ENCODE measurements at regions of chr5 and their contacts with region 1.

Region 1: DNA sequence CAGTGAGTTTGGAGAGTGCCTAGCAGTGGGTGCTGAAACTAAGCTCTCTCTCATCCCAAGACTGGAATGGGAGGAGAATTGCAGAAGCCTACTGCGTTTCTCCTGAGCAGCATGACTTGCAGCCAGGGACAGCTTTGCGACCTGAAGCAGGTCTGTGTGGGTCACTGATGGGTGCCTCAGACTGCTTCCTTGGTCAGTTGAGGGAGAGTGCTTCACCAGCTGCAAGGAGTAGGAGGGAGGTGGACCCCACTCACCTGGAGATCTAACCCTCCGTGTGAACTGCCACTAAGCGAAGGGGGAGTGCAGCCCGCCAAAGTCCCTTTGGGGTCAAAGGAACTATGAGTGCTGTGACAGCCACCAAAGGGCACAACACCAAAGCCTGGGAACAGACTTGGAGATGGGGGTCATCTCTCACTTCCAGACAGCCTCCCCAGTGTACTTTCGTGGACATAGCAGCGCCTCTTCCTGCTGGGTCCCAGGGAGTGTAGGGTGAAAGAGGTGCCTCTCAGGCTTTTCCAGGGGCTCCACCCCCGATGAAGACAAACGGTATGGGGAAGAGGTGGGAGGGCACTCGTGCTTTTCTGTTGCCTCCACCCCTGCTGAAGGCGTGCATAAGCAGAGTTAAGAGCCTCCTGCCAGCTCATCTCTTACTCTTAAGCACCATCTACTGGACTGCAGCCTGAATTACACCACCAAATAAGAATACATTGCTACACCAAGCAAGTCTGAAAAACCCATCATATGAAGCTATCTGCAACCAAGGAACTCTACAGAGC is 34.3 kb upstream of the MACIR start:
- DNase-seq: peak; percentile 78
- H3K4me3 ChIP-seq: no peak overlapping the region
- H3K27ac ChIP-seq: no peak overlapping the region
- H3K4me1 ChIP-seq: no peaks in the 10 kb centered on the region
- H3K27me3 ChIP-seq: no peaks in the 10 kb centered on the region
- CTCF ChIP-seq: peak; percentile 69 to 71
- POLR2A ChIP-seq: no peak

Region 2: GRCh38 chr5:102681407-102681983 is 542.8 kb before region 1 on chr5:
- CTCF ChIA-PET with region 1: interaction called, 26 read pairs
- POLR2A ChIA-PET with region 1: no interaction called
- dilution Hi-C with region 1: no loop called
- intact Hi-C with region 1: loop called (anchors 2 kb)
- DNase-seq: peak; percentile 85
- H3K4me3 ChIP-seq: no peak overlapping the region
- H3K27ac ChIP-seq: no peak overlapping the region
- H3K4me1 ChIP-seq: no peaks in the 10 kb centered on the region
- H3K27me3 ChIP-seq: peaks cover 4 to 8% of the 10 kb centered on the region in 2 experiments
- CTCF ChIP-seq: peak; percentile 83 to 86
- POLR2A ChIP-seq: no peak

Region 3: GRCh38 chr5:103041071-103041676 is 183.1 kb before region 1 on chr5:
- CTCF ChIA-PET with region 1: interaction called, 8 read pairs
- POLR2A ChIA-PET with region 1: no interaction called
- dilution Hi-C with region 1: no loop called
- intact Hi-C with region 1: loop called (anchors 1 kb)
- DNase-seq: peak; percentile 71
- H3K4me3 ChIP-seq: no peak overlapping the region
- H3K27ac ChIP-seq: no peak overlapping the region
- H3K4me1 ChIP-seq: no peaks in the 10 kb centered on the region
- H3K27me3 ChIP-seq: no peaks in the 10 kb centered on the region
- CTCF ChIP-seq: peak; percentile 8 to 30
- POLR2A ChIP-seq: no peak

Region 4: DNA sequence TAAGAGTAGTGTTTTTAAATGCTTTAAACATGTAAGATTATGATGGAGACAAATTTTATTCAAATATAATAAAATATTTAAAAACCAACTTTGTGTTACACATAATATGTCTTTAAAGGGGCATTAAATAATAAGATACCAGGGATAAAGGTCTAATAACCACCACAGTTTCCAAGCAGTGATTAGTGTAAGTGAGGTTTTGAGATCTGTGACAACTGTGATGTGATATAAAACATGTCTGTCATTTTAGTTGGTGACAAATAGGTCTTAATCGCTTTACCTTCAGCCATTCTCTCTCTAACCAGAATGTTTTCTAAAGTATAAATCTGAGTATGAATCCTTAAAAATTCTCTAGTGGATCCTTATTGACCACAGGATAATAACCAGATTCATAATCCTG is 76.1 kb before region 1 on chr5:
- CTCF ChIA-PET with region 1: interaction called, 11 read pairs
- POLR2A ChIA-PET with region 1: no interaction called
- dilution Hi-C with region 1: no loop called
- intact Hi-C with region 1: loop called (anchors 5 kb)
- DNase-seq: no peak
- H3K4me3 ChIP-seq: no peak overlapping the region
- H3K27ac ChIP-seq: no peak overlapping the region
- H3K4me1 ChIP-seq: no peaks in the 10 kb centered on the region
- H3K27me3 ChIP-seq: no peaks in the 10 kb centered on the region
- CTCF ChIP-seq: no peak
- POLR2A ChIP-seq: no peak

Region 5: GRCh38 chr5:103188436-103188835 is 35.9 kb before region 1 on chr5:
- CTCF ChIA-PET with region 1: interaction called, 11 read pairs
- POLR2A ChIA-PET with region 1: no interaction called
- dilution Hi-C with region 1: no loop called
- intact Hi-C with region 1: no loop called
- DNase-seq: no peak
- H3K4me3 ChIP-seq: no peak overlapping the region
- H3K27ac ChIP-seq: no peak overlapping the region
- H3K4me1 ChIP-seq: no peaks in the 10 kb centered on the region
- H3K27me3 ChIP-seq: no peaks in the 10 kb centered on the region
- CTCF ChIP-seq: no peak
- POLR2A ChIP-seq: no peak

Region 6: DNA sequence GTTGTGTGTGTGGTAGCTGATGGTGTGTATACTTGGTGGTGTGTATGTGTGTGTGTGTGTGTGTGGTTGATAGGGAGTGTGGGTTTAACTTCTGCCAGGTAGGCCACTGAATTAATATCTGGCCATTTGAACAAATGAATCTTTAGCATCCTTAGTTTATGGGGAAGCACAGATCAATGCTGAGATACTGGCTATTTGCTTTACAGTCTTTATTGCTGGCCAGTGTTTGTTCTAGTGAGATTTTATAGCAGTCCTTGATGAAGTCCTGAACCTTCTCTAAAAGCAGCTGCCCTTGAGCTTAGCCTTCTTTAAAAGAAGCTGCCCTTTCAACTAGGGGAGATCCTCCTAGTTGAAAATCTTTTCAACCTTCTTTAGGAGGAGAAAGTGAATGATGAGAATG is 103.6 kb after region 1 on chr5:
- CTCF ChIA-PET with region 1: no interaction called
- POLR2A ChIA-PET with region 1: no interaction called
- dilution Hi-C with region 1: no loop called
- intact Hi-C with region 1: no loop called
- DNase-seq: no peak
- H3K4me3 ChIP-seq: no peak overlapping the region
- H3K27ac ChIP-seq: no peak overlapping the region
- H3K4me1 ChIP-seq: no peaks in the 10 kb centered on the region
- H3K27me3 ChIP-seq: peaks cover 2 to 3% of the 10 kb centered on the region in 2 experiments
- CTCF ChIP-seq: no peak
- POLR2A ChIP-seq: no peak

Region 7: GRCh38 chr5:103475629-103476240 is 251.4 kb after region 1 on chr5:
- CTCF ChIA-PET with region 1: interaction called, 41 read pairs
- POLR2A ChIA-PET with region 1: no interaction called
- dilution Hi-C with region 1: no loop called
- intact Hi-C with region 1: no loop called
- DNase-seq: peak; percentile 66
- H3K4me3 ChIP-seq: no peak overlapping the region
- H3K27ac ChIP-seq: no peak overlapping the region
- H3K4me1 ChIP-seq: no peaks in the 10 kb centered on the region
- H3K27me3 ChIP-seq: peaks cover 0 to 2% of the 10 kb centered on the region in 2 experiments
- CTCF ChIP-seq: peak; percentile 31 to 34
- POLR2A ChIP-seq: no peak

Measured in endothelial cell of umbilical vein (primary cell).